ENCODE measurements at regions of chr14 and their contacts with region 1.

Region 1: DNA sequence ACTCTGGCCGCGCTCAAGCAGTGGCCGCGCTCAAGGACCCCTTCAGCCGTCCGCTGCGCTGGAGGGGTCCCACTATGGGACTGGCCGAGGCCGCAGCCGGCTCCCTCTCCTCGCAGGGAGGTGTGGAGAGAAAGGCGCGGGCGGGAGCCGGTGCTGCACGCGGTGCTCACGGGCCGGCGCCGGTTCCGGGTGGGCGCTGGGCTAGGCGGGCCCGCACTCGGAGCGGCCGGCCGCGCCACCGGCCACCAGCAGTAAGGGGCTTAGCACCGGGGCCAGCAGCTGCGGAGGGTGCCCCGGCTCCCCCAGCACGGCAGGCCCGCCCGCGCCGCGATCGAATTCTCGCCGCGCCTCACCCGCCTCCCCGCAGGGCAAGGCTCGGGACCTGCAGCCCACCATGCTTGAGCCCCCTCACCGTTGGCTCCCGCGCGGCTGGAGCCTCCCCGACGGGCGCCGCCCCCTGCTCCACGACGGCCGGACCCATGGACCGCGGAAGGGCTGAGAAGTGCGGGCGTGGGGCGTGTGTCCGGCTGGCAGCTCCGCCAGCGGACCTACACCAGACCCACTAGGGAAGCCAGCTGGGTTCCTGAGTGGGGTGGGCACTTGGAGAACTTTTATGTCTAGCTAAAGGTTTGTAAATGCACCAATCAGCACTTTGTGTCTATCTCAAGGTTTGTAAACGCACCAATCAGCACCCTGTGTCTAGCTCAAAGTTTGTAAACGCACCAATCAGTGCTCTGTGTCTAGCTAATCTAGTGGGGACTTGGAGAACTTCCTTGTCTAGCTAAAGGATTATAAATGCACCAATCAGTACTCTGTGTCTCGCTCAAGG is 49.5 kb downstream of the KLHL28 start:
- DNase-seq: peak in 1 of 14 experiments; percentile 8
- ATAC-seq: no peak
- H3K4me3 ChIP-seq: no peak overlapping the region
- H3K4me3 Mint-ChIP-seq: peak overlapping the region; percentile 12
- H3K27ac ChIP-seq: no peak overlapping the region
- H3K27ac Mint-ChIP-seq: no peak overlapping the region
- H3K4me1 ChIP-seq: peaks cover 9% of the 10 kb centered on the region
- H3K4me1 Mint-ChIP-seq: peaks cover 4% of the 10 kb centered on the region
- H3K27me3 ChIP-seq: peaks cover 28 to 33% of the 10 kb centered on the region in 2 experiments
- H3K27me3 Mint-ChIP-seq: peaks cover 45% of the 10 kb centered on the region
- CTCF ChIP-seq: no peak

Region 2: GRCh38 chr14:44369401-44370123 is 542.7 kb before region 1 on chr14:
- CTCF ChIA-PET with region 1: no interaction called
- POLR2A ChIA-PET with region 1: no interaction called
- intact Hi-C with region 1: no loop called
- DNase-seq: no peak
- ATAC-seq: no peak
- H3K4me3 ChIP-seq: no peak overlapping the region
- H3K4me3 Mint-ChIP-seq: no peak overlapping the region
- H3K27ac ChIP-seq: no peak overlapping the region
- H3K27ac Mint-ChIP-seq: no peak overlapping the region
- H3K4me1 ChIP-seq: no peaks in the 10 kb centered on the region
- H3K4me1 Mint-ChIP-seq: no peaks in the 10 kb centered on the region
- H3K27me3 ChIP-seq: no peaks in the 10 kb centered on the region
- H3K27me3 Mint-ChIP-seq: no peaks in the 10 kb centered on the region
- CTCF ChIP-seq: no peak

Region 3: DNA sequence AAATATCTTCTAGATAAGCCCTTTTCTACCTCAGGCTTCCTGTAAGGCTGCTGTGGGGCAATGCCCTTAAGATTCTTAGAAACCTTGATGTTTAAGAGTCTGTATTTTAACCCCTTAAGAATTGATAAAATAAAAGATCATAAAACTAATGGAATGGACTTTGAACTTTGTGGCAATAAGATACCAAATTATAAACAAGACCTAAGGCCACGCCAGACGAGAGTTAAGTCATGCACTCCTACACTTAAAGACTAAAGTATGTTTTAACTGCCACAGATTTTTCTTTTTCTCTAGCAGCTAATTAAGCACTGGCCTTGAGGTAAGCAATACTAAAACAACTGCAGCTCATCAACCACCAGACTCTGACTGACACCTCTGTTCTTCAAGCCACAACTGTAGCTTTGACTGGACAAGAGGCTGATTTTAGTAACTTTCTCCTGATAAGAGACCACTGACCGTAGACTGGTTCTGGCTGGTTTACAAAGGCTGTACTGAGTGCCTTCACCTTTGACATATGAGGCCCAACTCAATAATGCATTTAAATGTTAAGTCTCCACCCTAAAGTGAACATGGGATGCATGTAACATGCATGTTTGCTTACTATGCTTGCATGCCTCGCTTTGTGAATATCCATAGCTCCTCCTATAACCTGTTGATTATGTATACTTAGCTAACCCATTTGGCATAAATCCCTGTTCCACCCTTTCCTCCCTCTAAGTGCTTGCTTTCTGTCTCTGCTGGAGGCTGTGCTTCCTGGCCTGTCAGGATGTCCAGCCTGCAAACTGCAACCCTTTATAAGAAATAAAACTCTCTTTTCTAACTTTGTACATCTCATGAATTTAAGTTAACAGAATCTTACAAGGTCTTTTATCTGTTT is 22.4 kb before region 1 on chr14:
- CTCF ChIA-PET with region 1: no interaction called
- POLR2A ChIA-PET with region 1: no interaction called
- intact Hi-C with region 1: no loop called
- DNase-seq: no peak
- ATAC-seq: no peak
- H3K4me3 ChIP-seq: no peak overlapping the region
- H3K4me3 Mint-ChIP-seq: no peak overlapping the region
- H3K27ac ChIP-seq: no peak overlapping the region
- H3K27ac Mint-ChIP-seq: no peak overlapping the region
- H3K4me1 ChIP-seq: no peaks in the 10 kb centered on the region
- H3K4me1 Mint-ChIP-seq: no peaks in the 10 kb centered on the region
- H3K27me3 ChIP-seq: no peaks in the 10 kb centered on the region
- H3K27me3 Mint-ChIP-seq: peaks cover 8% of the 10 kb centered on the region
- CTCF ChIP-seq: no peak

Region 4: GRCh38 chr14:45267071-45267470 is 354.8 kb after region 1 on chr14:
- CTCF ChIA-PET with region 1: no interaction called
- POLR2A ChIA-PET with region 1: no interaction called
- intact Hi-C with region 1: loop called (anchors 1 to 2 kb)
- DNase-seq: no peak
- ATAC-seq: no peak
- H3K4me3 ChIP-seq: no peak overlapping the region
- H3K4me3 Mint-ChIP-seq: no peak overlapping the region
- H3K27ac ChIP-seq: no peak overlapping the region
- H3K27ac Mint-ChIP-seq: no peak overlapping the region
- H3K4me1 ChIP-seq: no peaks in the 10 kb centered on the region
- H3K4me1 Mint-ChIP-seq: no peaks in the 10 kb centered on the region
- H3K27me3 ChIP-seq: no peaks in the 10 kb centered on the region
- H3K27me3 Mint-ChIP-seq: peaks cover 5% of the 10 kb centered on the region
- CTCF ChIP-seq: no peak

Measured in CD4-positive, alpha-beta T cell (primary cell).